ENCODE measurements at regions of chr2 and their contacts with region 1.

Region 1: GRCh38 chr2:200405599-200406298 is 99.3 kb downstream of the SPATS2L start:
- DNase-seq: peak; percentile 57 to 99
- H3K4me3 ChIP-seq: peak overlapping the region; percentile 30; the same call in 1 of the 2 replicates
- H3K27ac ChIP-seq: peak overlapping the region; percentile 92
- H3K4me1 ChIP-seq: peaks cover 75% of the 10 kb centered on the region
- H3K27me3 ChIP-seq: no peaks in the 10 kb centered on the region
- CTCF ChIP-seq: no peak

Region 2: DNA sequence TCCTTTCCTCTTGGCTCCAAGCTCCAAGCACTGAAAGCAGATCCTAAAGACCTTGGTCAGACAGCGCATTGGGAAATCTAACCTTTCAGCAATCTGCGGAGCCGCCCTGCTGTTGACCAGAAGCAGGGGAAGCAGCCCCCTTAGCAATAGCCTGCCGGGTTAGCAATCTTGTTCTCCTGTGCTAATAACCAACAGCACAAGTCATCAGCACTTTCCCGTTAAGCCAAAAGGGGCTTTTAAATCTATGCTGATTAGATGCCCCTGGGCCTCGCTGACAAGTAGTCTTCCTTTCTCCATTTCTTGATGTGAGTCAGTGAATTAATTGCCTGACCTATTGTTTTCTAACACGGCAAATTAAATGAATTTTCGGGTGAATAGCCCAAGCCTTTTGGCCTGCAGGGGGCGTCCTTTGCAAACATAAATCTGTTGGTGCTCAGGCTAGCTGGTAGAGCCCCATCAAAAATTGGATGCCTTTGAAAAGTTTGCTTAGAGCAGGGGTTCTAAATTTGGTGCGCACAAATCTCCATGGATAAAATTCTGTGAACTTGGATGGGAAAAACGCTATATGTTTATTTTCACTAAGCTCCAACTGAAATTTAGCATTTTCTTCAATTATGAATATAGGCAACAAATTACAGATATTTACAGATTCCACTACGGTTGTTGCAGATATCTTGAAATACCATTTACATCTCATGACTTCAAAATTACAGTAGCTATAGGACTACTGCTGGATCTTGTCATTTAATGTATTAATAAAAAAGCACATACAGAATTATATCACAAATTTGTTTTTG is 425.7 kb before region 1 on chr2:
- CTCF ChIA-PET with region 1: no interaction called
- POLR2A ChIA-PET with region 1: no interaction called
- intact Hi-C with region 1: loop called (anchors 1 kb)
- DNase-seq: peak; percentile 71 to 77
- H3K4me3 ChIP-seq: no peak overlapping the region
- H3K27ac ChIP-seq: peak overlapping the region; percentile 21; the same call in 1 of the 2 replicates
- H3K4me1 ChIP-seq: peaks cover 42% of the 10 kb centered on the region
- H3K27me3 ChIP-seq: no peaks in the 10 kb centered on the region
- CTCF ChIP-seq: peak; percentile 92

Region 3: DNA sequence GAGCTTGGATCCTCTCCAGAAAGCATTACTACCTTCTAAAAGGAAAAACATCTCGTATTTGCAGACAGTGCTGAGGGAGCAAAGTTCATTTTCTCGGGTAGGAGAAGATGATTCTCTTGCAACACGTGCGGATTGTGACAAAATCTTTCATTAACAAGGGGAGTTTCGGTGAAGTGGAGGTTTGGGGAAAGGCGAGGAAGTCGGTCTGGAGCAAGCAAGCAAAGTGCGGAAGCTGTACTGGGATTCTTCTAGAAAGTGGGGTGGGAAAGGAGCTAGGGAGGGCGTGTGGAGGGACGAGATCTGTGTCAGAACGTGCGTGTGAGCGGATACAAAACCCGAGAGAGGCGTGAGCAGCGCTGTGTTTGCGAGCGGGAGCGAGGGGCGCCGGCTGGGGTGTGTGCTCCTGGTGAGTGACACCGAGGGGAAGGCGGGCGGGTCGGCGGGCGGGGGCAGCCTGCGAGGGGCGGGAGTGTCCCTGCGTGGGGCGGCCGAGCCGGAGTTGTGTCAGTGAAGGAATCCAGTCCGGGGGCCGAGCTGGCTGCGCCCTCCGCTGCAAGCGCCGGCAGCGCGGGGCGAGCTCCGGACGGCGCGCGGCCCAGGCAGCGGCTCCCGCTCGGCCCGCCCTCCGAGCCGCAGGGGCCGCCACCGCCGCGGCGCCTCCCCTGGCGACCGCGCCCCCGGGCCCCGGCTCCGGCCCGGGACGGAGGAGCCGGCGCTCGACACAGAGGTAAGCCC is 99.4 kb before region 1 on chr2 and contains the start of gene SPATS2L:
- CTCF ChIA-PET with region 1: no interaction called
- POLR2A ChIA-PET with region 1: interaction called, 6 read pairs
- intact Hi-C with region 1: loop called (anchors 2 kb)
- DNase-seq: peak; percentile 63 to 76
- H3K4me3 ChIP-seq: peak within 1 kb of the TSS; percentile 86
- H3K27ac ChIP-seq: peak within 1 kb of the TSS; percentile 84
- H3K4me1 ChIP-seq: peaks cover 70% of the 10 kb centered on the region
- H3K27me3 ChIP-seq: no peaks in the 10 kb centered on the region
- CTCF ChIP-seq: 0 out of 2 replicates have a peak, but pooled peaks have one; percentile 28
- total RNA-seq, gene SPATS2L: 189 and 199 TPM in 2 replicates

Region 4: GRCh38 chr2:200352636-200353035 is 53.1 kb before region 1 on chr2:
- CTCF ChIA-PET with region 1: no interaction called
- POLR2A ChIA-PET with region 1: no interaction called
- intact Hi-C with region 1: loop called (anchors 5 kb)
- DNase-seq: peak; percentile 49 to 85
- H3K4me3 ChIP-seq: no peak overlapping the region
- H3K27ac ChIP-seq: peak overlapping the region; percentile 66
- H3K4me1 ChIP-seq: peaks cover 45% of the 10 kb centered on the region
- H3K27me3 ChIP-seq: no peaks in the 10 kb centered on the region
- CTCF ChIP-seq: no peak

Region 5: DNA sequence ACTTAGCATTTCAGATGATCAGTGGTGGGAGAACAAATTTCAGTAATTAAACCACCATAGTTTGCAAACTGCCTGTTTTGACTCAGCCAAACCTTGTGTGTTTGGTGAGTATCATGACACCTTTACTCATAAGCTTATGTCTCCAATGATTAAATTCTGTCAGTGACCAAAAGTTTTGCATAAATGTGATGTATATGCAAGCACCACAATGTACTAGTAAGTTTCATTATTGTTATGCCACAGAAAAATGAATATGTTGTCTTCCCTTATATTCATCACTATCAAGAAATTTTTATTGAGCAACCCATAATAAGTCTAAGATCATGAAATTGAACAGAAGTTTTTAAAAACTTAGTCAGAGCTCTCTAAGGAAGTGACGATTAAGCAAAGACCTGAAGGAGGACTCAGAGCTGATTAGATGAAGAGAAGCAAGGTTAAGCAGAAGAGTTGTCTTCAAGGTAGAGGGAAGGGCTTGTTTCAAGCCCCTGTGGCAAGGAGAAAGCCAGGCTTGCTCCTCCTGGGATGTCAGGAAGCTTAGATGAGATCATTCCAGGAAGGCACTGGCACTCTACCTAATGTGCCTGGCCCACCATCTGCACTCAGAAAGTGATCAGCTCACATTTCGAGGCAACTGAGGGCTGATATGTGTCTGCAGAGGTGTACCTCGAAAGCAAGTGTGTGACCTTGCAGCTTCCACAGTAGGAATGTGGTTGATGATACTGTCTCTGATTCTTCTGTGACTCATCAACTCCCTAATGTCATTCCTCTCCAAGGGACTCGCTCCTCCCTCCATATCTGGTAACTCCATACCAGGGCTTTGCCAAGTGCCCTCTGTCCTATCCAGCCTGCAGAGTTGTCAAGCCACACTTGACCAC is 49.4 kb after region 1 on chr2:
- CTCF ChIA-PET with region 1: no interaction called
- POLR2A ChIA-PET with region 1: no interaction called
- intact Hi-C with region 1: no loop called
- DNase-seq: peak; percentile 29 to 48
- H3K4me3 ChIP-seq: no peak overlapping the region
- H3K27ac ChIP-seq: no peak overlapping the region
- H3K4me1 ChIP-seq: 0 out of 2 replicates have a peak, but pooled peaks cover 7% of the 10 kb centered on the region
- H3K27me3 ChIP-seq: no peaks in the 10 kb centered on the region
- CTCF ChIP-seq: no peak

Region 6: GRCh38 chr2:200662738-200663137 is 257.0 kb after region 1 on chr2:
- CTCF ChIA-PET with region 1: no interaction called
- POLR2A ChIA-PET with region 1: no interaction called
- intact Hi-C with region 1: loop called (anchors 2 kb)
- DNase-seq: peak; percentile 80 to 99
- H3K4me3 ChIP-seq: no peak overlapping the region
- H3K27ac ChIP-seq: peak overlapping the region; percentile 82
- H3K4me1 ChIP-seq: peaks cover 44% of the 10 kb centered on the region
- H3K27me3 ChIP-seq: no peaks in the 10 kb centered on the region
- CTCF ChIP-seq: no peak

Measured in PC-9 (cell line).